Motor neuron (in vitro differentiated cells): ENCODE measurements at regions of chr5 and their contacts with region 1.

Region 1: DNA sequence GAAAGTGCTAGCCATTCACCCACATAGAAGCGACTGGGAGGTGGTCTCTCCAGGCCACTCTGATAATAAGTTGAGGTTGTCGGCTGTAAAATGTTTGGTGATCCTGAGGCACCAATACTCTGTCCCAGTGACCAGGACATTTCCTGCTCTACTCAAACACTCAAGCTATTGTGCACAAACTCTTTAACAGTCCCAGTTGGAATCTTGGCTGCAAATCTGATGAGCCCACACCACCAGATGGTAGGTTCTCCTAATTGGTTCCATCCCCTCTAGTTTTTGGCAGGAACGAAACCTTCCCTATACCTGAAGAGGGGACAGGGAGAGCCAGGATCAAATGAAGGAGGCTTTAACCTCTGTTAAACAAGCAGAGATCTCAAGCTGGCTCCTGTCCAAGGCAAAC is 14.3 kb downstream of the GRIA1 start:
- ATAC-seq: no peak
- H3K4me3 ChIP-seq: no peak overlapping the region
- H3K27ac ChIP-seq: no peak overlapping the region
- H3K4me1 ChIP-seq: peaks cover 8 to 21% of the 10 kb centered on the region in 2 donors

Region 2: GRCh38 chr5:153050496-153051179 is 454.1 kb before region 1 on chr5:
- in situ Hi-C with region 1: no loop called
- ATAC-seq: no peak
- H3K4me3 ChIP-seq: no peak overlapping the region
- H3K27ac ChIP-seq: no peak overlapping the region
- H3K4me1 ChIP-seq: no peaks in the 10 kb centered on the region

Region 3: DNA sequence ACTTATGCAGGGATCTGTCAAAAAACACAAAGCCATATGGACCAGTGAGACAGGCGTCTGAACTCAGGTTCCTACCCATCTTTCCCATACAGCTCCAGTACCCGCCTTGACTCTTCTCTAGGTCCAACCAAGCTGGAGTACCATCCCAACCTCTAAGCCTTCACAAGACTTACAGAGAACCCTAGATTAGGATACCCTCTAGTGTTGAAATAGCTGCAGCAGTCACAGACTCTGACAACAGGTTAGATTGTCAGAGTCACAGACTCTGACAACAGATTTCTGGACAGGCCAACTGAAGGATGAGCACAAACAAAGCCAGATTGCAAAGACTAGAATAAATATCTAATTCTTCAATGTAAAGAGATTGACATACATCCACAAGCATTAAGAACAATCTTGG is 251.8 kb after region 1 on chr5:
- in situ Hi-C with region 1: loop called in 1 of 9 experiments (anchors 10 kb)
- ATAC-seq: peak in 3 of 8 experiments; percentile 42 to 76 (median 71)
- H3K4me3 ChIP-seq: no peak overlapping the region
- H3K27ac ChIP-seq: no peak overlapping the region
- H3K4me1 ChIP-seq: peaks cover 2 to 4% of the 10 kb centered on the region in 2 donors